Activated CD4-positive, alpha-beta T cell treated with anti-CD3 and anti-CD28 coated beads, Interleukin-2, amount 10 ng/mL, durations not matched to agents 24 days and 14 days (primary cell): ENCODE measurements at regions of chr3 and their contacts with region 1.

Region 1: GRCh38 chr3:59450946-59451763 is 401.3 kb upstream of the CFAP20DC start:
- DNase-seq: peak; percentile 93
- H3K4me3 Mint-ChIP-seq: peak overlapping the region; percentile 65
- H3K27ac Mint-ChIP-seq: peak overlapping the region; percentile 94
- H3K4me1 Mint-ChIP-seq: peaks cover 65% of the 10 kb centered on the region
- H3K27me3 Mint-ChIP-seq: no peaks in the 10 kb centered on the region

Region 2: DNA sequence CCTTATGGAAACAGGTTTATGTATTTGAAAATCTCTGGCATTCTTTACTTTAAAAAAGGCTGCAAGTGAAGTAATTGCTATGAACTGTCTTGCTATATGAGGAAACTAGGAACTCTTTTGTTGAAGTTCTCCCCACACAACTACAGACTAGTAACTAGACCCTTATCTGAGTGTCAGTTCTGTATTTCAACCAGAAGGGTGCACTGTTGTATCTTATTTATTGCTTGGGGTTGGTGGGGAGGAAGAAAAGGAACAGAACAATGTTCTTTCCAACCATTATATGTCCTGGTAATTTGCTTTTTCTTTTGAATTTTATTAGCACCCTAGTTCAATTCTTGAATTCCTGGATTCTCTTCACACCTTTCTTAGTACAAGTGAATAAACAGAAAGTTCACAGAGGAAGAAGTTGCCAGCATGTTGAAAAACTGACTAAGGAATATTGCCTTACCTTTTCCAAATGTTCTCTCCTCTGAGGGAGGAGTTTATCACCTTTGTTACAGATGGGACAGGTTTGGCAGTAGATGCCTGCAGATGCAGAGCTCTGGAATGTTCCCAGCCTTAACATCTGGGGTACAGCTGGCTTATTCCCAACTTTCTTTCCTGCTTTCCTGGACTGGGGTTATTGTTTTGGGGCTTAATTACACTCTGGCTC is 238.9 kb before region 1 on chr3:
- intact Hi-C with region 1: loop called (anchors 5 kb)
- DNase-seq: peak; percentile 73
- H3K4me3 Mint-ChIP-seq: no peak overlapping the region
- H3K27ac Mint-ChIP-seq: no peak overlapping the region
- H3K4me1 Mint-ChIP-seq: peaks cover 9% of the 10 kb centered on the region
- H3K27me3 Mint-ChIP-seq: peaks cover 11% of the 10 kb centered on the region

Region 3: GRCh38 chr3:59424268-59425010 is 26.7 kb before region 1 on chr3:
- intact Hi-C with region 1: loop called (anchors 1 kb)
- DNase-seq: peak; percentile 71
- H3K4me3 Mint-ChIP-seq: peak overlapping the region; percentile 1
- H3K27ac Mint-ChIP-seq: peak overlapping the region; percentile 73
- H3K4me1 Mint-ChIP-seq: peaks cover 52% of the 10 kb centered on the region
- H3K27me3 Mint-ChIP-seq: no peaks in the 10 kb centered on the region

Region 4: GRCh38 chr3:59480486-59480995 is 29.4 kb after region 1 on chr3:
- intact Hi-C with region 1: loop called (anchors 1 kb)
- DNase-seq: peak; percentile 66
- H3K4me3 Mint-ChIP-seq: peak overlapping the region; percentile 67
- H3K27ac Mint-ChIP-seq: peak overlapping the region; percentile 83
- H3K4me1 Mint-ChIP-seq: peaks cover 26% of the 10 kb centered on the region
- H3K27me3 Mint-ChIP-seq: no peaks in the 10 kb centered on the region

Region 5: GRCh38 chr3:59526999-59527398 is 75.8 kb after region 1 on chr3:
- intact Hi-C with region 1: loop called (anchors 1 kb)
- DNase-seq: no peak
- H3K4me3 Mint-ChIP-seq: no peak overlapping the region
- H3K27ac Mint-ChIP-seq: peak overlapping the region; percentile 68
- H3K4me1 Mint-ChIP-seq: peaks cover 11% of the 10 kb centered on the region
- H3K27me3 Mint-ChIP-seq: no peaks in the 10 kb centered on the region

Region 6: GRCh38 chr3:59935025-59935424 is 483.9 kb after region 1 on chr3:
- intact Hi-C with region 1: loop called (anchors 10 kb)
- DNase-seq: peak; percentile 62
- H3K4me3 Mint-ChIP-seq: peak overlapping the region; percentile 58
- H3K27ac Mint-ChIP-seq: peak overlapping the region; percentile 88
- H3K4me1 Mint-ChIP-seq: peaks cover 28% of the 10 kb centered on the region
- H3K27me3 Mint-ChIP-seq: no peaks in the 10 kb centered on the region